ENCODE measurements at regions of chr12 and their contacts with region 1.

Region 1: DNA sequence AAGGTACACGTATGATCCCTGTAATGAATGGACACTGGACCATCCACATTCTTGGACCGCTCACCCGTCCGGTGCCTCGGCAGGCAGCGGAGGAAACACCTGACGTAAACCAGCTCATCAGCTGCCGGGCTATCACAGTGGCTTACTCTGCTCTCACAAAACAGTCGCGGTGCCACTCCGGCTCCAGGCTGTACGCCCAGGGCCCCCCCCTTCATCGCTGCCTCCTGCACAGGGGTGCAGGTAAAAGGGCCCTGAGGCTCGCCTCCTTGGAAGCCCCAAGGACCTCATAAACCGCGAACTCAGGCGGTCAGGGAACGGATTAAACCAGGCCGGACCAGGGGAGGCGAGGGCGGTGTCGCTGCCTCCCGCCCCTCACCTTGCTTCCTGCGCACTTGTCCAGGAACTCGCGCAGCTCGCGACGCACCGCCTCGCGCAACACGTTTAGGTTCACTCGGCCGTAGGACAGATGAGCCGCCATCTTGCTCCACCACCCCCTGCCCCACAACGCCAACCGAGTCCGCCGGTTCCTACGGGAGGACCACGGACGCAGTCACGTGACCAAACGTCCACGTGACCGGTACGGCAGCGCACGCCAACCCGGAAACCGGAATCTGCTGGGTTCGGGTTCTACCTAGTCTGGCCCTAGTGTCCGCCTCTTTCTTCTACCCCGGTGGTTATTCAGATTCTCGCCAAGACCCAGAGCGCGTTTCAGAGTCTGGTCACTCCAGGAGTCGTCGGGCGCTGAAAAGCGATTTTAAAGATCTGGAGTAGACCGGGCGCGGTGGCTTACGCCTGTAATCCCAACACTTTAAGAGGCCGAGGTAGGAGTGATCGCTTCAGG is at the start of gene VPS33A:
- DNase-seq: peak; percentile 99
- H3K4me3 ChIP-seq: peak within 1 kb of the TSS; percentile 87 to 95 (median 92)
- H3K27ac ChIP-seq: peak within 1 kb of the TSS; percentile 87 to 91 (median 90)
- H3K4me1 ChIP-seq: peaks cover 13 to 28% (median 18%) of the 10 kb centered on the region in 4 donors
- H3K27me3 ChIP-seq: no peaks in the 10 kb centered on the region
- CTCF ChIP-seq: peak in 1 of 3 experiments; percentile 11
- EP300 ChIP-seq: no peak
- POLR2A ChIP-seq: no peak
- total RNA-seq, gene VPS33A: 12.5 to 15.7 (median 14.7) TPM

Region 2: GRCh38 chr12:122225683-122226407 is 40.3 kb before region 1 on chr12 and contains the start of gene DIABLO:
- intact Hi-C with region 1: loop called (anchors 5 kb)
- DNase-seq: peak; percentile 100
- H3K4me3 ChIP-seq: peak within 1 kb of the TSS; percentile 70 to 97 (median 92)
- H3K27ac ChIP-seq: peak within 1 kb of the TSS; percentile 93 to 97 (median 96)
- H3K4me1 ChIP-seq: peaks cover 28 to 36% (median 36%) of the 10 kb centered on the region in 4 donors
- H3K27me3 ChIP-seq: no peaks in the 10 kb centered on the region
- CTCF ChIP-seq: no peak
- EP300 ChIP-seq: no peak
- POLR2A ChIP-seq: peak; percentile 93
- total RNA-seq, gene DIABLO: 30.8 to 43.6 (median 39.3) TPM

Measured in esophagus muscularis mucosa (tissue), 4 donors.